ENCODE measurements at regions of chr13 and their contacts with region 1.

Region 1: GRCh38 chr13:69168436-69168835 is 939.2 kb upstream of the ATXN8OS start:
- DNase-seq: no peak
- ATAC-seq: peak; percentile 51
- H3K4me3 ChIP-seq: no peak overlapping the region
- H3K27ac ChIP-seq: no peak overlapping the region
- H3K4me1 ChIP-seq: no peaks in the 10 kb centered on the region
- H3K27me3 ChIP-seq: no peaks in the 10 kb centered on the region
- CTCF ChIP-seq: no peak
- EP300 ChIP-seq: no peak
- POLR2A ChIP-seq: no peak
- RAD21 ChIP-seq: no peak

Region 2: DNA sequence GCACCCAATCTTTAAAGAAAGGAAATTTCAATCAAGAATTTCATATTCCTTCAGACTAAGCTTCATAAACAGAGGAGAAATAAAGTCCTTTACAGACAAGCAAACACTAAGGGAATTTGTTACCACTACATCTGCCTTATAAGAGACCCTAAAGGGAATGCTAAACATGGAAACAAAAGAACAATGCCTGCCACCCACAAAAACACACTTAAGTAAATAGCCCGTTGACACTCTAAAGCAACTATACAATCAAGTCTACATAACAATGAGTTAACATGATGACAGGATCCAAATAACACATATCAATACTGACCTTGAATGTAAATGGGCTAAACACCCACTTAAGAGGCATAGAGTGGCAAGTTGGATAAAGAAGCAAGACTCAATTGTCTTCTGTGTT is 117.7 kb before region 1 on chr13:
- CTCF ChIA-PET with region 1: no interaction called
- POLR2A ChIA-PET with region 1: no interaction called
- in situ Hi-C with region 1: no loop called
- intact Hi-C with region 1: no loop called
- DNase-seq: no peak
- ATAC-seq: no peak
- H3K4me3 ChIP-seq: no peak overlapping the region
- H3K27ac ChIP-seq: no peak overlapping the region
- H3K4me1 ChIP-seq: no peaks in the 10 kb centered on the region
- H3K27me3 ChIP-seq: no peaks in the 10 kb centered on the region
- CTCF ChIP-seq: no peak
- EP300 ChIP-seq: no peak
- POLR2A ChIP-seq: no peak
- RAD21 ChIP-seq: no peak

Region 3: DNA sequence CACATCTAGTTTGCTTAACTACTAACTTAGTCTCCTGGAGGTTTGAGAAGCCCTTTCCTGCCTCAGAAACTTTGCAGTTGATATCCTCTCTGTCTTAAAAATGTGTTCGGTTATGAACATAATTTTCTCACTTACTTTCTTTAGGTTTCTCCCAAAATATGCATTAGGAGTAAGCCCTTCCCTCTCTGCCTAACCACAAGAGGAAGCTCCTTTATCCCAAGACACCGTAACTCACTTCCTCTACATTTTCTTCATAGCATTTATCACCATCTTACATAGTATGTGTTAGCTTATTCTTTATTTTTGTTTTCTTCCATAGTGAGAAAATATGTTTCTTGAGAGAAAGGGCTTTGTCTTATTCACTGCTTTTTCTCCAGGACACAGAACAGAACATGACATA is 13.3 kb before region 1 on chr13:
- CTCF ChIA-PET with region 1: no interaction called
- POLR2A ChIA-PET with region 1: no interaction called
- in situ Hi-C with region 1: no loop called
- intact Hi-C with region 1: loop called (anchors 1 kb)
- DNase-seq: no peak
- ATAC-seq: no peak
- H3K4me3 ChIP-seq: no peak overlapping the region
- H3K27ac ChIP-seq: no peak overlapping the region
- H3K4me1 ChIP-seq: no peaks in the 10 kb centered on the region
- H3K27me3 ChIP-seq: no peaks in the 10 kb centered on the region
- CTCF ChIP-seq: no peak
- EP300 ChIP-seq: no peak
- POLR2A ChIP-seq: no peak
- RAD21 ChIP-seq: no peak

Measured in HepG2 (cell line).